Tibial artery (tissue), 4 donors: ENCODE measurements at regions of chr14 and their contacts with region 1.

Region 1: GRCh38 chr14:92783816-92784431 is 10.2 kb upstream of the GOLGA5 start:
- DNase-seq: peak in 1 of 2 donors; percentile 25
- H3K4me3 ChIP-seq: no peak overlapping the region
- H3K27ac ChIP-seq: no peak overlapping the region
- H3K4me1 ChIP-seq: peaks cover 0 to 5% (median 2%) of the 10 kb centered on the region in 4 donors
- H3K27me3 ChIP-seq: no peaks in the 10 kb centered on the region
- CTCF ChIP-seq: peak; percentile 51 to 72

Region 2: GRCh38 chr14:92719890-92720323 is 64.0 kb before region 1 on chr14:
- intact Hi-C with region 1: loop called (anchors 2 kb)
- DNase-seq: peak in 1 of 2 donors; percentile 54
- H3K4me3 ChIP-seq: no peak overlapping the region
- H3K27ac ChIP-seq: peak overlapping the region; percentile 57 to 61
- H3K4me1 ChIP-seq: peaks cover 0 to 21% (median 11%) of the 10 kb centered on the region in 4 donors
- H3K27me3 ChIP-seq: no peaks in the 10 kb centered on the region
- CTCF ChIP-seq: no peak

Region 3: DNA sequence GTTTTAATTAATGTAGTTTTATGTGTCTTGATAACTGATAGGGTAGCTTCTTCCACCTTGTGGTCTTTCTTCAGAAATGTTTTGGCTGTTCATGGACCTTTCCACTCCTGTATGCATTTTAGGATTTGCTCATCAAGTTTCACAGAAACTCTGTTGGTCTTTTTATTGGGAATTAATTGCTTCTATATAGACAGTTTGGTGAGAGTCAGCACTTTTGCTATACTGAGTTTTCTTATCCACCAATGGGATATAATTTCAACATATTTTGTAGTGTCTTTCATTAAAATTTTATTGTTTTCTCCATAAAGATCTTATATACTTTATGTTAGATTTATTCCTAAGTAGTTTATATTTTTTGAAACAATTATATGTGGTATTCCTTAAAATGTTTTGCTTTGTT is 18.0 kb after region 1 on chr14:
- intact Hi-C with region 1: no loop called
- DNase-seq: no peak
- H3K4me3 ChIP-seq: no peak overlapping the region
- H3K27ac ChIP-seq: no peak overlapping the region
- H3K4me1 ChIP-seq: peaks cover 0 to 44% (median 9%) of the 10 kb centered on the region in 4 donors
- H3K27me3 ChIP-seq: no peaks in the 10 kb centered on the region
- CTCF ChIP-seq: no peak